HEK293 (cell line): ENCODE measurements at regions of chr17 and their contacts with region 1.

Region 1: GRCh38 chr17:40355123-40355803 is 9.3 kb downstream of the GJD3 start:
- H3K4me3 ChIP-seq: no peak overlapping the region
- H3K27ac ChIP-seq: no peak overlapping the region
- H3K4me1 ChIP-seq: no peaks in the 10 kb centered on the region
- CTCF ChIP-seq: peak; percentile 98

Region 2: DNA sequence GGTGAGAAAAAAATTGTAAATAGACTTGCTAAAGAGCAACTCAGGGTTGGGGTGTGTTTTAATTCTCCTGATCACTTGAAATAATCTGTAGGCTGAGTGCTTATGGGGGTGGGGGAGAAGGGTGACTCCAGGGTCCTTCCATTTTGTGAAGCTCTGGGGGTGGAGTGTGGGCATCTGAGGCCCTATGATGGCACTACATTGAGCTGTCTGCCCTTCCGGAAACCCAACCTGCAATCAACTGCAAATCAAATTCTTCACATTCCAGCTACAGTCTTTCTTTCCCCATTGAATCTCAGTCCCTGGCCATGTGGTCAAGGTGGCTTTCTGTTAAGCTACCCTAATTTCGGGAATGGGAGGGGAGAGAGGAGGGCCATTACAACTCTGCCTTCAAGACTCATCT is 73.6 kb before region 1 on chr17:
- CTCF ChIA-PET with region 1: interaction called, 11 read pairs
- POLR2A ChIA-PET with region 1: no interaction called
- H3K4me3 ChIP-seq: no peak overlapping the region
- H3K27ac ChIP-seq: no peak overlapping the region
- H3K4me1 ChIP-seq: no peaks in the 10 kb centered on the region
- CTCF ChIP-seq: no peak

Region 3: GRCh38 chr17:40293363-40293762 is 61.9 kb before region 1 on chr17:
- CTCF ChIA-PET with region 1: interaction called, 453 read pairs
- POLR2A ChIA-PET with region 1: interaction called, 7 read pairs
- H3K4me3 ChIP-seq: no peak overlapping the region
- H3K27ac ChIP-seq: no peak overlapping the region
- H3K4me1 ChIP-seq: peaks cover 3% of the 10 kb centered on the region
- CTCF ChIP-seq: no peak

Region 4: GRCh38 chr17:40309031-40309948 is 46.0 kb before region 1 on chr17 and contains the start of gene RARA:
- CTCF ChIA-PET with region 1: interaction called, 453 read pairs
- POLR2A ChIA-PET with region 1: interaction called, 13 read pairs
- H3K4me3 ChIP-seq: no peak within 1 kb of the TSS
- H3K27ac ChIP-seq: peak within 1 kb of the TSS; percentile 70
- H3K4me1 ChIP-seq: peaks cover 29% of the 10 kb centered on the region
- CTCF ChIP-seq: no peak

Region 5: DNA sequence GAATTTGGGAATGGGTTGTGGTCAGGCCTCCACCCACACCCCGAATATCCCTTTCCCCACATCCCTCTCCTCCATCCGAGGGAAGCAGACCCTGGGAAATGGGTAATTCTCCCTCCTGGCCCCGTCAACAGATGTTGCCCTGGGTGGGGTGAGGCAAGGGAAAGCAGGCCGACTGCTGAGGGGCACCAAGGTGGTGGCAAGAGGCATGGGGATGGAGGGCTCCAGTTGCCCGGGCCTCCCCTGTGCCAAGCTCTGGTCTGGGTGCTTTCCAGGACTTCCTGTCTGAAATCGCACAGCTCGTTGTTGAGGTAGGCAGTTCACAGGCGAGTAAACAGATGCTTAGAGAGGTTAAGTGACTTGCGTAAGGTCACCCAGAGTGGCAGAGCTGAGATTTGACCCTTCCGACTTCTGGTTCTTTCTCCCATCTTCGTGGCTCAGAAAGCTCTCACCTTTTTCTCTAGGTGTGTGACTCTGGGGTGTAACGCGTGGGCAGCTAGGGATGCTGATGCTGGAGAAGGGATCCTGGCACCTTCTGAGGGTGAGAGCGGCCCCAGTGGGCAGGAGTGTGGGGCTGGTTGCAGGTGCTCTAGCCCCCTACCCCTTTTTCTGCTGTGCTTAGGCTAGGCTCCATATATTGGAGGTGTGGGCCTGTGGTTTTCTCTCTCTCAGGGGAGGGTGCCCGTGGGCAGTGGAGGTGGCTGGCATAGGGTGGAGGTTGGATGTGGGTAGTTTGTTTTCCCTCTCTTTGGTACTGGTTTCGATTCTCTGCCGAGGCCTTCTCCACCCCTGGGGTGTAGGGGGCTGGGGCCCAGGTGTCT is 29.0 kb before region 1 on chr17:
- CTCF ChIA-PET with region 1: interaction called, 10 read pairs
- POLR2A ChIA-PET with region 1: no interaction called
- H3K4me3 ChIP-seq: no peak overlapping the region
- H3K27ac ChIP-seq: no peak overlapping the region
- H3K4me1 ChIP-seq: peaks cover 29% of the 10 kb centered on the region
- CTCF ChIP-seq: no peak